CD8-positive, alpha-beta T cell (primary cell): ENCODE measurements at regions of chr2 and their contacts with region 1.

Region 1: GRCh38 chr2:217785544-217786045 is 217.2 kb downstream of the TNS1 start:
- DNase-seq: peak; percentile 43 to 85 (median 71)
- ATAC-seq: peak; percentile 62
- H3K4me3 ChIP-seq: no peak overlapping the region
- H3K4me3 Mint-ChIP-seq: no peak overlapping the region
- H3K27ac ChIP-seq: no peak overlapping the region
- H3K27ac Mint-ChIP-seq: no peak overlapping the region
- H3K4me1 ChIP-seq: peaks cover 8% of the 10 kb centered on the region
- H3K4me1 Mint-ChIP-seq: peaks cover 21% of the 10 kb centered on the region
- H3K27me3 ChIP-seq: no peaks in the 10 kb centered on the region
- H3K27me3 Mint-ChIP-seq: no peaks in the 10 kb centered on the region
- CTCF ChIP-seq: peak; percentile 79

Region 2: DNA sequence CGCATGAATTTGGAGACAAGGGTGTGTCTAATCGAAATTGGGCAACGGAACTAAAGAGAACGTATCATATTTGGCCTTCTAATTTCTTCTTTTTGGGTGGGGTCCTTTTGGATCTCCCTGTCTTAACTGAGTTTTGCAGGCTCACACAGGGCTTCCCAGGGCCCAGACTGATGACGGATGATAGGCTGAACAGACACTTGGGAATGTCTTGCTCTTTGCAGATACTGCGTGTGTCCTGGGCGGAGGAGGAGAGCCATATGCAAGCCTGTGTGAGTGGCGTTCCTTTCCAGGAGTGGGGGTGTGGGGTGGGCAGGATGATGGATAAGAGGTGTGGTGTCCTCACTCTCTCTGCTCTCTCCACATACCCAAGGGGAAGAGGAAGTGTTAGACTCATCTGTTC is 965.8 kb before region 1 on chr2:
- CTCF ChIA-PET with region 1: no interaction called
- POLR2A ChIA-PET with region 1: no interaction called
- intact Hi-C with region 1: no loop called
- DNase-seq: no peak
- ATAC-seq: no peak
- H3K4me3 ChIP-seq: no peak overlapping the region
- H3K4me3 Mint-ChIP-seq: no peak overlapping the region
- H3K27ac ChIP-seq: no peak overlapping the region
- H3K27ac Mint-ChIP-seq: no peak overlapping the region
- H3K4me1 ChIP-seq: no peaks in the 10 kb centered on the region
- H3K4me1 Mint-ChIP-seq: no peaks in the 10 kb centered on the region
- H3K27me3 ChIP-seq: peaks cover 0 to 2% of the 10 kb centered on the region in 2 experiments
- H3K27me3 Mint-ChIP-seq: no peaks in the 10 kb centered on the region
- CTCF ChIP-seq: no peak

Region 3: DNA sequence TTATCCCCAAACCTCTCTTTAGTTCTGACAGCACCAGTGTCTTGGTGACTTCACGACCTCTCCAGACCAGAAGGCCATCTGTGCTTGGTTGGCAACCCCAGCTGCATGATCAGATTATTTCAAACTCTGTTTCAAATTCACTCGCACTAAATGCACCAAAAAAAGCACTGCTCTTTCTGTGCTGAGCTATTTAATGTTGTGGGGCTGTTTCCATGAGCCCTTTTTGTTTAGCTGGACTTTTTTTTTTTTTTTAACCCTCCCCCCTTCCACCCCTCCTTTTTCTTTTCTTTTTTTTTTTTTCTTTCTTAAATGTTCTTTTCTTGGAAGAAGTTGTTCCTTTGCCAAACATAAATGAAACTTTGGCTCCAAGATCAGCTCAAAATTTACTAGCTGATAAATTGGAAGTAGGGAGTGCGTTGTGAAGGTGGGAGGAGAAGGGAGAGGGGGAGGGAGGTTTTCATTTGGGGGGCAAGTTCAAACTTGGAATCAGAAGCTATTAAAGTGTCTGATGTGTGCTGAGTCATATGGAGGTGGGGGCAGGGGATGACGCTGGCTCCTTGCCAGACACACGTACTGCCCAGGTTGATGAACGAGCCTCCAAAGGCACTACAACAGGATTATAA is 382.7 kb before region 1 on chr2:
- CTCF ChIA-PET with region 1: no interaction called
- POLR2A ChIA-PET with region 1: no interaction called
- intact Hi-C with region 1: no loop called
- DNase-seq: no peak
- ATAC-seq: no peak
- H3K4me3 ChIP-seq: no peak overlapping the region
- H3K4me3 Mint-ChIP-seq: no peak overlapping the region
- H3K27ac ChIP-seq: no peak overlapping the region
- H3K27ac Mint-ChIP-seq: no peak overlapping the region
- H3K4me1 ChIP-seq: peaks cover 13% of the 10 kb centered on the region
- H3K4me1 Mint-ChIP-seq: peaks cover 15% of the 10 kb centered on the region
- H3K27me3 ChIP-seq: no peaks in the 10 kb centered on the region
- H3K27me3 Mint-ChIP-seq: no peaks in the 10 kb centered on the region
- CTCF ChIP-seq: no peak

Region 4: DNA sequence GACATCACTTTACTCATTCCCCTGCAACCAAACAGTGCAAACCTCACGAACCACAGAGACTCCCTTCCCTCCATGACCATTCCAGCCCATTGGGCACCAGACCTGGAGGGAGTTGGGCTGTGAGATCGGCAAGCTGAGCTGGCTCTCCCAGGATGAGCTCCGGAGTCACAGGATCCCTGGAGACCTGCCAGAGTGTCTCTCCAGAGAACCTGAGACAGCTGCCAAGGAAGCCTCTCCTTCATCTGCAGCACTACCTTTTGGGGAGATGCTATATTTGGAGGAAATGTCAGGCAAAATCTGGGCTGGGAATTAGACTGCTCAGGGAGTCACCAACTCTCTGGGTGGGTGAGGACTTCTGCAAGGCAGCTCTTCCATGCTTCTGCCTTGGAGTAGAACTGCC is 200.2 kb before region 1 on chr2:
- CTCF ChIA-PET with region 1: no interaction called
- POLR2A ChIA-PET with region 1: no interaction called
- intact Hi-C with region 1: no loop called
- DNase-seq: no peak
- ATAC-seq: no peak
- H3K4me3 ChIP-seq: no peak overlapping the region
- H3K4me3 Mint-ChIP-seq: no peak overlapping the region
- H3K27ac ChIP-seq: no peak overlapping the region
- H3K27ac Mint-ChIP-seq: no peak overlapping the region
- H3K4me1 ChIP-seq: no peaks in the 10 kb centered on the region
- H3K4me1 Mint-ChIP-seq: peaks cover 6% of the 10 kb centered on the region
- H3K27me3 ChIP-seq: no peaks in the 10 kb centered on the region
- H3K27me3 Mint-ChIP-seq: no peaks in the 10 kb centered on the region
- CTCF ChIP-seq: no peak

Region 5: GRCh38 chr2:217798743-217799562 is 13.4 kb after region 1 on chr2:
- CTCF ChIA-PET with region 1: interaction called, 33 read pairs
- POLR2A ChIA-PET with region 1: no interaction called
- intact Hi-C with region 1: no loop called
- DNase-seq: peak in 2 of 9 experiments; percentile 31 to 35
- ATAC-seq: no peak
- H3K4me3 ChIP-seq: no peak overlapping the region
- H3K4me3 Mint-ChIP-seq: no peak overlapping the region
- H3K27ac ChIP-seq: no peak overlapping the region
- H3K27ac Mint-ChIP-seq: no peak overlapping the region
- H3K4me1 ChIP-seq: no peaks in the 10 kb centered on the region
- H3K4me1 Mint-ChIP-seq: peaks cover 1% of the 10 kb centered on the region
- H3K27me3 ChIP-seq: no peaks in the 10 kb centered on the region
- H3K27me3 Mint-ChIP-seq: no peaks in the 10 kb centered on the region
- CTCF ChIP-seq: no peak

Region 6: GRCh38 chr2:217886720-217887309 is 101.2 kb after region 1 on chr2:
- CTCF ChIA-PET with region 1: interaction called, 54 read pairs
- POLR2A ChIA-PET with region 1: no interaction called
- intact Hi-C with region 1: loop called (anchors 1 kb)
- DNase-seq: peak; percentile 20 to 74 (median 61)
- ATAC-seq: peak; percentile 42
- H3K4me3 ChIP-seq: no peak overlapping the region
- H3K4me3 Mint-ChIP-seq: no peak overlapping the region
- H3K27ac ChIP-seq: no peak overlapping the region
- H3K27ac Mint-ChIP-seq: no peak overlapping the region
- H3K4me1 ChIP-seq: no peaks in the 10 kb centered on the region
- H3K4me1 Mint-ChIP-seq: peaks cover 4% of the 10 kb centered on the region
- H3K27me3 ChIP-seq: no peaks in the 10 kb centered on the region
- H3K27me3 Mint-ChIP-seq: peaks cover 3% of the 10 kb centered on the region
- CTCF ChIP-seq: peak; percentile 62

Region 7: DNA sequence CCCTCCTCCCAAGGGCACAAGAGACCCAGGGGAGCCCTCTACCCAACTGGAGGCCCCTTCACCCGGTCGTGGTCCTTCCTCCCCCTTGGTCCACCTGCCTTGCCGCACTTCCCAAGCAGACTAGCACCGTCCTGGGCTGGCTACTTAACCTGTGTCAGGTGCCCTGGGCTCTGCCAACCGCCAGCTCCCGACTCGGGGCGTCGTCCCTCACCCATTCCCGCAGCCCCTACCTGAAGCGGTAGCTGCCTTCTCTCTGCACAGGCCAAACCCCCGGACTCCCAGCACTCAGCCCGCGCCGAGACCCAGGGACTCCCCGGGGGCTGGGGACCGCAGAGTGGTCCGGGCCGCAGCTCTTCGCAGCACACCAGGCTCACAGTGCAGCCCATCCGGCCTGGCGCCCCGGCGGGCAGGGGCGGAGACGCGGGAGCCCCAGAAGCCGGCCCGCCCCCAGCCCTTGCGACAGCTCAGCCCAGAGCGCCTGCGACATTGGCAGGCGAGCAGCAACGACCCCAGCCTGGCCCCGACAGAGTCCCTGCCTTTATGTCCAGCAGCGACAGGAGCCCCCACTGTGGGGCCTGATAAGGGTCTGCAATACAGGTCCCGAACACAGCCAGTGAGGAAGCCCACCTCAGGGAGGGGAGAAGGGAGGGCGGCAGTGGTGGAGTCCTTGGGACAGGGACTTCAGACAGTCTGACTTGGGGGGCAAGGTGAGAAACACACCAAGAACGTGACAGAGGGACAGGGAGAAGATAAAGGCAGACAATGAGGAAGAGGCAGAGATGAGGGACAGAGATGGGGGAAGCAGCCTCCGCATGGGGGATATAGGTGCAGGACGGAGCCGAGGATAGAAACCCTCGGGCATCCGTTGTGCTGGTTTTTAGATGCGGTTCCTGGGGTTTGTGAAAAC is 248.2 kb after region 1 on chr2:
- CTCF ChIA-PET with region 1: interaction called, 19 read pairs
- POLR2A ChIA-PET with region 1: no interaction called
- intact Hi-C with region 1: loop called (anchors 1 kb)
- DNase-seq: peak in 2 of 9 experiments; percentile 15 to 50
- ATAC-seq: peak; percentile 6
- H3K4me3 ChIP-seq: peak overlapping the region; percentile 37 to 61
- H3K4me3 Mint-ChIP-seq: peak overlapping the region; percentile 79
- H3K27ac ChIP-seq: no peak overlapping the region
- H3K27ac Mint-ChIP-seq: peak overlapping the region; percentile 20
- H3K4me1 ChIP-seq: peaks cover 16% of the 10 kb centered on the region
- H3K4me1 Mint-ChIP-seq: peaks cover 8% of the 10 kb centered on the region
- H3K27me3 ChIP-seq: no peaks in the 10 kb centered on the region
- H3K27me3 Mint-ChIP-seq: peaks cover 2% of the 10 kb centered on the region
- CTCF ChIP-seq: no peak

Region 8: GRCh38 chr2:218069606-218070300 is 284.2 kb after region 1 on chr2:
- CTCF ChIA-PET with region 1: interaction called, 12 read pairs
- POLR2A ChIA-PET with region 1: no interaction called
- intact Hi-C with region 1: loop called (anchors 1 kb)
- DNase-seq: no peak
- ATAC-seq: no peak
- H3K4me3 ChIP-seq: no peak overlapping the region
- H3K4me3 Mint-ChIP-seq: peak overlapping the region; percentile 47
- H3K27ac ChIP-seq: no peak overlapping the region
- H3K27ac Mint-ChIP-seq: no peak overlapping the region
- H3K4me1 ChIP-seq: peaks cover 4% of the 10 kb centered on the region
- H3K4me1 Mint-ChIP-seq: peaks cover 8% of the 10 kb centered on the region
- H3K27me3 ChIP-seq: peaks cover 0 to 4% of the 10 kb centered on the region in 2 experiments
- H3K27me3 Mint-ChIP-seq: peaks cover 26% of the 10 kb centered on the region
- CTCF ChIP-seq: no peak